ENCODE measurements at regions of chr22 and their contacts with region 1.

Region 1: DNA sequence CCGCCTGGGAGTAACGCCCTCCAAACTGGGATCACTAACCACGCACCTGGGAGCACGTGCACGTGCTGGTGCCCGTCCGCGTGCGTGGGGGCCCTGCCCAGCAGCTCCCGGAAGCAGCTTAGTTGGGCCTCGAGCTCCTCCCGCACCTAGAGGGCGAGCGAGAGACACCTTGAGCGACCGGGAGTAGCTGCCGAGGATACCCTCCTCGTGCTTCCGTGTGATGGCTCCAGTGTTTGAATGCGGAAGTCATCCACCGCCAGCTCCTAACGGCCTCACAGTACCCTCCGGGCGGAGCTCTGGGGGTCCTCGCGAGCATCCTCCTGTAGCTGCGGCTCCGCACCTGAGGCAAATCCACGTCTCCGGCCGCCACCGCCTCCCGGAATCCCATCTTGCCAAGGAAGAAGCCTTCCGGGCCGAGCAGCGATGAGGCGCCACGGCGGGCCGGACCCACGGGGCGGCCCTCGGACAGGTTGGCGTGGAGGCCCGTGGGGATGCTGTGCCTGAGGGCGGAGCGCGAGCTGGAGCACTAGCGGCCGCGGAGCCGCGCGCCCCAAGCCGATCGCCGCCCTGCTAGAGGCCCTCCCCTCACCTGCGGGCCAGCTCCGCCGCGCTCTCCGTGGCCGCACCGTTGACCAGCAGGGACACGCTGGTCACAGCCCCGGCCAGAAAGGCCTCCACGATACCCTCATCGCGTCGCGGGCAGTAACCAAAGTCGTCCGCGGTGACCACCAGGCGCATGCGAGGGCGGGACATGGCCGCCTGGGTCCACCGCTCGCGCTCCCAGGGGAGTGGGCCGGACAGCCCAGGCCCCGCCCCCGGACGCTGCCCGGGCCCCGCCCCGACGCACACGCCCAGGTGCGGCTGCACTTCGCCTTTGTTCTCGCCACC is at the start of gene YDJC:
- DNase-seq: peak; percentile 88 to 97 (median 93)
- ATAC-seq: peak; percentile 95
- H3K4me3 ChIP-seq: peak within 1 kb of the TSS; percentile 88
- H3K4me3 Mint-ChIP-seq: peak within 1 kb of the TSS; percentile 87 to 97 (median 91)
- H3K27ac ChIP-seq: peak within 1 kb of the TSS; percentile 92
- H3K27ac Mint-ChIP-seq: peak within 1 kb of the TSS; percentile 84 to 97 (median 93)
- H3K4me1 ChIP-seq: peaks cover 6 to 26% of the 10 kb centered on the region in 2 donors
- H3K4me1 Mint-ChIP-seq: peaks cover 29 to 44% (median 38%) of the 10 kb centered on the region in 7 donors
- H3K27me3 ChIP-seq: no peaks in the 10 kb centered on the region
- H3K27me3 Mint-ChIP-seq: no peaks in the 10 kb centered on the region
- total RNA-seq, gene YDJC: 29.0 to 56.0 (median 38.0) TPM

Region 2: DNA sequence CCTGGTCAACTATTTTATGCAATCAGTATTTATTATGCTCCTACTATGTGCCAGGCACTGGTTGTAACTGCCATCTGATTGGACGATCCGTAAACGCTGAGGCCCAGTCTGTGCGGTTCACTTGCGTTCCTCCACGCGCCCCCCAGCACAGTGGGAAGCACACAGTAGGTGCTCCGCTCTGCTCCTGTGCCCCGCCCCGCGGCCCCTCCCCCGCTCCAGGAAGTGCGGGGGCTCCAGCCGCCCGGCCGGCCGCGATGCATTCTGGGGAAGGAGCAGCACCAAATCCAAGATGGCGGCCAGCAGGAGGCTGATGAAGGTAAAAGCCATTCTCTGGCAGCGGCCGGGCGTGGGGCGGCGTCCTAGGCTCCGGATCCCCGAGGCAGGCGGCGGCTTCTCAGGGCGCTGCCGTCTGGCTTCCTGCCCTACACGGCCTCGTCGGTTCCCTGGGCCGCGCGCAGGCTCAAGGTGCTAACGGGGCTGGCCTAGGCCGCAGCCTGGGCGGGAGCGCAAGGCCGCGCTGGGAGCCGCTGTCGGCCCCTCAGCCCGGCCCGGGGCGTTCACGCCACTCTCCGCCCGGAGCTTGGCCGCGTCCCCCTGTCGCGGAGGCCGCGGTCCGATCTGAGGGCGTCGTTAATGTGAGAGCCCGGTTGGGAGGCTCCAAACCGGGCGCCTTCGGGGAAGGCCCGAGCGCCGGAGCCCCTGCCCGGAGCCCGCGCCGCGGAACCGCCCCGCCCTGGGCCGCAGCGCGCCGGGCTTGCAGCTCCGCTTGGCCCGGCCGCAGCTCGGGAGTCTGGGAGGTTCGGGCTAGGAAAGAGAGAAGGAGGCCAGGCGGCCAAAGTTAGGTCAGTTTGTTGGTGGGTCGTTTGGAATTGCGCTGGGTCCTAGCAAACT is 61.8 kb before region 1 on chr22 and contains the start of gene UBE2L3:
- CTCF ChIA-PET with region 1: interaction called, 4 read pairs
- POLR2A ChIA-PET with region 1: interaction called, 5 read pairs
- intact Hi-C with region 1: loop called in 1 of 2 experiments (anchors 1 kb)
- DNase-seq: peak; percentile 74 to 88 (median 83)
- ATAC-seq: peak; percentile 95
- H3K4me3 ChIP-seq: peak within 1 kb of the TSS; percentile 72
- H3K4me3 Mint-ChIP-seq: peak within 1 kb of the TSS; percentile 81 to 93 (median 90)
- H3K27ac ChIP-seq: peak within 1 kb of the TSS; percentile 95
- H3K27ac Mint-ChIP-seq: peak within 1 kb of the TSS; percentile 73 to 97 (median 90)
- H3K4me1 ChIP-seq: peaks cover 39 to 40% of the 10 kb centered on the region in 2 donors
- H3K4me1 Mint-ChIP-seq: peaks cover 35 to 56% (median 42%) of the 10 kb centered on the region in 7 donors
- H3K27me3 ChIP-seq: no peaks in the 10 kb centered on the region
- H3K27me3 Mint-ChIP-seq: no peaks in the 10 kb centered on the region
- total RNA-seq, gene UBE2L3: 22.5 to 55.0 (median 34.2) TPM

Region 3: DNA sequence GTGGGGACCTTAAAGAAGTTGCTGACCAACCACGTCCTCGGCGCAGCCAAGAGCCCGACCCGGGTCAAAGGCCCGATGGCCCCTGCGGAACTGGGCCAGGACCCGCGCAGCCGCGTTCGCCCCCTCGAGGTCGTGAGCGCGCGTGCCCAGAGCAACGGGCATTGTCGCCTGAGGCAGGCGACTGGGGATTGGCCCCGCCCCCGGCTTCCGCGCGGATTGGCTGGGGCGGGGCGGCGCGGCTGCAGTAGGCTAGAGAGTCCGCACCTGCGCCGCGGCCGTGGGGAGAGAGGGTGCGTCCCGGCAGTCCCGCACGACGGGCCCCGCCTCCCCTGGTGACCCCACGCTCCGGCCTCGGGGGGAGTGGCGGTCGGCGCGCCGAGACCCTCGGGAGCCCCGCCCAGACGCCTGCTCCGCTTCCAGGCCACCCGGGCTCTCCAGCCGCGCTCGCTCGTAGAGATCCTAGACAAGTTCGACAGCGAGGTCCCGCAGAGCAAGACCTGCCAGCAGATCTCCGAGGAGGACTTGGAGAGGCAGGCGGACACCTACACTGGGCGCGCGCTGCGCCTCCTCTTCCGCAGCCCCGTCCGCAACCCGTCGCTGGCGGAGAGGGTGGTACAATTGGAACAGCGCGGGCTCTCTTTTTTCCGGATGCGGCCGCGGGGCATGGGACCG is 28.0 kb after region 1 on chr22:
- CTCF ChIA-PET with region 1: no interaction called
- POLR2A ChIA-PET with region 1: interaction called, 4 read pairs
- intact Hi-C with region 1: loop called in 1 of 2 experiments (anchors 1 kb)
- DNase-seq: peak; percentile 61 to 90 (median 67)
- ATAC-seq: peak; percentile 96
- H3K4me3 ChIP-seq: peak overlapping the region; percentile 56
- H3K4me3 Mint-ChIP-seq: peak overlapping the region; percentile 75 to 94 (median 86)
- H3K27ac ChIP-seq: peak overlapping the region; percentile 62
- H3K27ac Mint-ChIP-seq: peak overlapping the region in 5 of 9 donors; percentile 38 to 91 (median 68)
- H3K4me1 ChIP-seq: peaks cover 0 to 14% of the 10 kb centered on the region in 2 donors
- H3K4me1 Mint-ChIP-seq: peaks cover 11 to 26% (median 13%) of the 10 kb centered on the region in 7 donors
- H3K27me3 ChIP-seq: no peaks in the 10 kb centered on the region
- H3K27me3 Mint-ChIP-seq: no peaks in the 10 kb centered on the region

Region 4: DNA sequence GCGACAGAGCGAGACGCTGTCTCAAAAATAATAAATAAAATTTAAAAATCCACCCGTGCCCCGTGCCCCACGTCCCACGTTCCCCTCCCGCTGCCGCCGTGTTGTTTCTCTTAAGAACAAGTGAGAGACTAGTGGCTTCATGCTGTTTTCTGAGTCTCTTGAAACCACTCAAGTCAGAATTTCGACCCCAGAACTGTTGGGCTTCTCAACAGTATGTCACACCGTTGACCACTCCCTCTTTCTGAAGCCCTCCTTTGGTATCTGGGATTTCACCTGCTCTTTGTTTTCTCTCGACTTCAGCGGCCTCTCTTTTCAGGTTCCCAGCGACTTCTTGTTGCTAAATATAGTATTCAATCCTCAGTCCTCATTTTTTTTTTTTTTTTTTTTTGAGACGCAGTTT is 37.3 kb after region 1 on chr22:
- CTCF ChIA-PET with region 1: interaction called, 4 read pairs
- POLR2A ChIA-PET with region 1: interaction called, 10 read pairs
- intact Hi-C with region 1: loop called in 1 of 2 experiments (anchors 1 kb)
- DNase-seq: no peak
- ATAC-seq: no peak
- H3K4me3 ChIP-seq: peak overlapping the region; percentile 99
- H3K4me3 Mint-ChIP-seq: peak overlapping the region; percentile 95 to 100 (median 98)
- H3K27ac ChIP-seq: peak overlapping the region; percentile 86
- H3K27ac Mint-ChIP-seq: peak overlapping the region; percentile 79 to 99 (median 97)
- H3K4me1 ChIP-seq: peaks cover 6 to 16% of the 10 kb centered on the region in 2 donors
- H3K4me1 Mint-ChIP-seq: peaks cover 29 to 45% (median 42%) of the 10 kb centered on the region in 7 donors
- H3K27me3 ChIP-seq: no peaks in the 10 kb centered on the region
- H3K27me3 Mint-ChIP-seq: peaks cover 0 to 2% (median 0%) of the 10 kb centered on the region in 5 donors

Region 5: GRCh38 chr22:21697021-21697771 is 67.7 kb after region 1 on chr22:
- CTCF ChIA-PET with region 1: no interaction called
- POLR2A ChIA-PET with region 1: no interaction called
- intact Hi-C with region 1: no loop called
- DNase-seq: no peak
- ATAC-seq: no peak
- H3K4me3 ChIP-seq: no peak overlapping the region
- H3K4me3 Mint-ChIP-seq: no peak overlapping the region
- H3K27ac ChIP-seq: no peak overlapping the region
- H3K27ac Mint-ChIP-seq: peak overlapping the region in 2 of 9 donors; percentile 36 to 40
- H3K4me1 ChIP-seq: no peaks in the 10 kb centered on the region
- H3K4me1 Mint-ChIP-seq: peaks cover 0 to 9% (median 0%) of the 10 kb centered on the region in 7 donors
- H3K27me3 ChIP-seq: no peaks in the 10 kb centered on the region
- H3K27me3 Mint-ChIP-seq: no peaks in the 10 kb centered on the region

Region 6: DNA sequence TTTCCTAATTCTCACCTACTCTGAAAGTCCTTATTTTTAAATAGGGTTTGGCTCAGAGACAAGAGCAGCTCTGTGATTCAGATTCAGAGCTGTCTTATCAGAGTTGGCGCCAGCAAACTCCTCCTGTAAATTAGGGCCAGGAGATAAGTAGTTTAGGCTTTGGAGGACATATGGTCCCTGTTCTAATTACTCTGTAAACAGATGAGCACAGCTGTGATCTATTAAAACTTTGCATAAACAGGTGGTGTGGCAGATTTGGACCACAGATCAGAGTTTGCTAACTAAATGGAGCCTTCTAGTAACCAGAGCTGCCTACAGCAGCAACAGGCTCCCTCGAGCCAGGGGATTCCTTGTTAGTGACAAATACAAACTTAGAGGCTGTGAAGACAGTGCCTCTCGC is 78.2 kb after region 1 on chr22:
- CTCF ChIA-PET with region 1: no interaction called
- POLR2A ChIA-PET with region 1: no interaction called
- intact Hi-C with region 1: no loop called
- DNase-seq: no peak
- ATAC-seq: no peak
- H3K4me3 ChIP-seq: no peak overlapping the region
- H3K4me3 Mint-ChIP-seq: no peak overlapping the region
- H3K27ac ChIP-seq: no peak overlapping the region
- H3K27ac Mint-ChIP-seq: no peak overlapping the region
- H3K4me1 ChIP-seq: no peaks in the 10 kb centered on the region
- H3K4me1 Mint-ChIP-seq: no peaks in the 10 kb centered on the region
- H3K27me3 ChIP-seq: no peaks in the 10 kb centered on the region
- H3K27me3 Mint-ChIP-seq: no peaks in the 10 kb centered on the region